A673 (cell line): ENCODE measurements at regions of chr13 and their contacts with region 1.

Region 1: DNA sequence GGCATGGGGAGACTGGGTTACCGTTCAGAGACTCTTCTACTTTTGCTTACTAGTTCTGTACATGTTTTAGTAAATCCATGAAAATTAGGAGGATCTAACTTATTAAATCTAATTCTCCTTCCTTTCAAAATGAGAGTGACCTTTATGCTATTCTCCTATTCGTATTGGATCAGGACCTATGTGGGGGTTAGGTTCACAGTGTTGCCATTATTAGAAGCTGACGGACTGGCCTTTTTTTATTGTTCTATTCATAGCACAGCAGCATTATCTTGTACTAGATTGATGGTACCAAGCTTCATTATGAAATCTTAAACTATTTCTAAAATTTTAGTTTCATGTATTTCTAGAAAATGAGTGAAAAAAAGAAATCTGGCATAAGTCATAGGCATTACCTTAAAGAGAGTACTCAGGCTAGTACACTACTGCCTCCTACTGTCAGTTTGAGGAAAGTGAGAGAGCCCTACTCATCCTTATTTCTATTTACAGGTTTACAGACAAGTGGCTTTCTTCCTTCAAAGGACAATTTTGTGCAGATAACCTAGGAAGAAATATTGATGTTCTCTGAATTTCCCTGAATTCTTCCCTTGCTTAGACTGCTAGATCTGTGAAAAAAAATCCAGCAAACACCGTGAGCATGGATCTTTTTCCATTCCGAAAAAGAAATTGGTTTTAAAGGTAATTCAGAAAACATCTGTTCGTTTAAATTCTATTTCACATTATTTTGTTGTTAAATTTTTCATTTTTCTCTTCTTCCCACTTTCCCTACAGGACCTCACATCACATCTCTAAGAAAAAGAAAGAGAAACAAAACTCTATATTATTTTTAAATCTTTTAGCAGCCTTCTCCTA is 485.5 kb downstream of the DIAPH3 start:
- DNase-seq: peak; percentile 84
- H3K4me3 ChIP-seq: no peak overlapping the region
- H3K27ac ChIP-seq: peak overlapping the region; percentile 88
- H3K4me1 ChIP-seq: peaks cover 77% of the 10 kb centered on the region
- H3K27me3 ChIP-seq: no peaks in the 10 kb centered on the region
- CTCF ChIP-seq: peak; percentile 90

Region 2: GRCh38 chr13:59230484-59231264 is 447.5 kb before region 1 on chr13:
- CTCF ChIA-PET with region 1: no interaction called
- POLR2A ChIA-PET with region 1: no interaction called
- intact Hi-C with region 1: loop called (anchors 10 kb)
- DNase-seq: peak; percentile 63
- H3K4me3 ChIP-seq: no peak overlapping the region
- H3K27ac ChIP-seq: no peak overlapping the region
- H3K4me1 ChIP-seq: peaks cover 26% of the 10 kb centered on the region
- H3K27me3 ChIP-seq: no peaks in the 10 kb centered on the region
- CTCF ChIP-seq: no peak

Region 3: DNA sequence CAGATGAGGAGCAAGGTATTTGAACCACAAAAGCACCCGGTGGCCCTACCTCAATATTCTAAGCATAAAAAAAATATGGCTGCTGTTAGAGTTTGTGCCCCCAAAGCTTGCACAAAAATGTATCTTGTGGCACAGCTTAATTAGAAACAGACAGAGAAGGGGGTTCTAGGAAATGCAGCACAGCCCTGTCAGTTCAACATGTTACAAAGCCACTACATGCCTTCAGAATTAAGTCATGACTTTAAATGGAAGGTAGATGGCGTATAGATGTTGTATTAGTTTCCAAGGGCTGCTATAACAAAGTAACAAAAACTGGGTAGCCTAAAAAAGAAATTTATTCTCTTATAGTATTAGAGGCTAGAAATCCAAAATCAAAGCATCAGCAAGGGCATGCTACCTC is 218.2 kb before region 1 on chr13:
- CTCF ChIA-PET with region 1: no interaction called
- POLR2A ChIA-PET with region 1: no interaction called
- intact Hi-C with region 1: loop called (anchors 5 kb)
- DNase-seq: peak; percentile 36
- H3K4me3 ChIP-seq: no peak overlapping the region
- H3K27ac ChIP-seq: no peak overlapping the region
- H3K4me1 ChIP-seq: peaks cover 16% of the 10 kb centered on the region
- H3K27me3 ChIP-seq: no peaks in the 10 kb centered on the region
- CTCF ChIP-seq: no peak; the same call in 1 of the 2 replicates

Region 4: GRCh38 chr13:59562924-59563323 is 115.3 kb before region 1 on chr13:
- CTCF ChIA-PET with region 1: no interaction called
- POLR2A ChIA-PET with region 1: no interaction called
- intact Hi-C with region 1: no loop called
- DNase-seq: no peak
- H3K4me3 ChIP-seq: no peak overlapping the region
- H3K27ac ChIP-seq: no peak overlapping the region
- H3K4me1 ChIP-seq: peaks cover 20% of the 10 kb centered on the region
- H3K27me3 ChIP-seq: no peaks in the 10 kb centered on the region
- CTCF ChIP-seq: no peak

Region 5: GRCh38 chr13:59750860-59751259 is 72.7 kb after region 1 on chr13:
- CTCF ChIA-PET with region 1: no interaction called
- POLR2A ChIA-PET with region 1: no interaction called
- intact Hi-C with region 1: loop called (anchors 2 kb)
- DNase-seq: peak; percentile 93
- H3K4me3 ChIP-seq: peak overlapping the region; percentile 35
- H3K27ac ChIP-seq: peak overlapping the region; percentile 76
- H3K4me1 ChIP-seq: peaks cover 73% of the 10 kb centered on the region
- H3K27me3 ChIP-seq: no peaks in the 10 kb centered on the region
- CTCF ChIP-seq: peak; percentile 29; the same call in 1 of the 2 replicates

Region 6: DNA sequence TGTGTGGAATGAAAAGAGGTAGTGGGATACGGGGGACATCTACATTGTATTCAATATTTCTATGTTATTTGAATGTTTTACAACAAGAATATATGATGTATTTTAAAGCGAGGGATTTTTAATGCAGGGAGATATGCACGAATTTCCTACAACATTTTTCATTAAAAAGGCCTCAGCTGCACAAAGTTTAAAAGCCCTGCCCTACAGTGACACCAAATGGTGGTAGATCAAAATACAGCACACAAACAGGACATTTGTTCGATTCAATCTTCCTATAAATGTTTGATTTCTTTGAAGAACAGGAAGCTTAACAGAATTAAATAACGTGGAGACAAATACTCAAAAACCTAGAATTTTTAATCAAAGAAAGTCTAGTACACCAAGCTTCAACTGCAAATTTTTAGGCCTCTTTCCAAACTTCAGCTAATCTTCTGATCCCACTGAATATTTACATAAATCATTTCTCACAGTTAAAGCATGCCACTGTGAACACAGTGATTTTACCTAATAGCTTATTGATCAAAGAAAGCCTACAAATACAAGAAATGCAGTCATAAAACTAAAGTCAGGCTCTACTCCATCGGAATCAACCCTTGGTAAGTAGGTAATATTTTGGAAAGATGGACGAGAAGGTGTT is 228.3 kb after region 1 on chr13:
- CTCF ChIA-PET with region 1: interaction called, 5 read pairs
- POLR2A ChIA-PET with region 1: no interaction called
- intact Hi-C with region 1: loop called (anchors 2 kb)
- DNase-seq: peak; percentile 75
- H3K4me3 ChIP-seq: no peak overlapping the region
- H3K27ac ChIP-seq: peak overlapping the region; percentile 64
- H3K4me1 ChIP-seq: peaks cover 32% of the 10 kb centered on the region
- H3K27me3 ChIP-seq: no peaks in the 10 kb centered on the region
- CTCF ChIP-seq: peak; percentile 79

Region 7: GRCh38 chr13:60431108-60431700 is 753.0 kb after region 1 on chr13:
- CTCF ChIA-PET with region 1: no interaction called
- POLR2A ChIA-PET with region 1: no interaction called
- intact Hi-C with region 1: loop called (anchors 5 kb)
- DNase-seq: peak; percentile 87
- H3K4me3 ChIP-seq: no peak overlapping the region
- H3K27ac ChIP-seq: peak overlapping the region; percentile 35
- H3K4me1 ChIP-seq: peaks cover 36% of the 10 kb centered on the region
- H3K27me3 ChIP-seq: no peaks in the 10 kb centered on the region
- CTCF ChIP-seq: peak; percentile 86